ENCODE measurements at regions of chr3 and their contacts with region 1.

Region 1: GRCh38 chr3:62299857-62300406 is 73.4 kb downstream of the FEZF2 start:
- DNase-seq: no peak
- ATAC-seq: peak; percentile 65
- H3K4me3 ChIP-seq: no peak overlapping the region
- H3K27ac ChIP-seq: no peak overlapping the region
- H3K4me1 ChIP-seq: no peaks in the 10 kb centered on the region
- H3K27me3 ChIP-seq: no peaks in the 10 kb centered on the region
- CTCF ChIP-seq: no peak

Region 2: DNA sequence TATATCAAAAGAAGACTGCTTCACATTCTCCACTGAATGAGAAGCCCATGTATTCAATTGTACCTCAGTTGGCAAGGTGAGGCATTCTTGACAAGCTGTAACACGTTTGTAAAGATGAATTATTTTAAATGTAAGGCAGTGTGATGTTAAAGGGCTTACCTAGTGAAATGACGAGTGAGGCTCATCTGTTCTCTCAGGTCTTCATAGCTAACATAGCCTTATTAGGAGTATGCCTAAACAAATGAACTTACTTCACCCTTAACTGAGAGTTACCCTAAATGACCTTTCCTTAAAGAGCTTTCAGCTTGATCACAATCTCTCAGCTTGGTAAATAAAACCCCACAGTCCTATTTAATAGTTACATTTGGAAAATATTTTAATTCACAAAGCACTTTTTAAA is 53.8 kb before region 1 on chr3:
- CTCF ChIA-PET with region 1: no interaction called
- POLR2A ChIA-PET with region 1: no interaction called
- intact Hi-C with region 1: loop called (anchors 2 kb)
- DNase-seq: no peak
- ATAC-seq: no peak
- H3K4me3 ChIP-seq: no peak overlapping the region
- H3K27ac ChIP-seq: no peak overlapping the region
- H3K4me1 ChIP-seq: no peaks in the 10 kb centered on the region
- H3K27me3 ChIP-seq: no peaks in the 10 kb centered on the region
- CTCF ChIP-seq: no peak